ENCODE measurements at regions of chr10 and their contacts with region 1.

Region 1: DNA sequence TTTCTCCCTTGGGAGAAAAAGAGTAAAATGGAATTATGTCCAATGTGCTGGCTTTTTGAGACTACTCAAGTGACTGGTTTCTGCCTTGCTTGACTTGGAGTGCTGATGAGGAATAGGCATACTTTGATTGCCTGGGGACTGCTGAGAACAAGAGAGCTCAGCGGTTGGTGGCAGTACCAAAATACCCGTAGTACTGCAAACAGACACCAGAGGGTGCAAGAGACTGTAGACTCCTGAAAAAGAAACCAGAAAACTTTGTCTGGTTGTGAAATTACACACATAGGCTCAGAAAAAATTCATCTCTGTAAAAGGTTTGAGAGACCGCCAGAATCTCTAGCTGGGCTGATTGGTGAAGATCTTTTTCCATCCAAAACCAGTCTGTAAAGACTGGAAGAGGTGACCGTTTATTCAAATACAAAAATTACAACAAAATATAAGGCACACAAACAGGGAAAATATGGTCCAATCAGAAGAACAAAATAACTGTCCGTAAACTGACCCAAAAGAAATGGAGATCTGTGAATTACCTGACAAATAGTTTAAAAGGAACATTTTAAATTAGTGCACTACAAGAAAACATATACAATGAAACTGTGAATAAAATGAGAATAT is 18.5 kb downstream of the BICC1 start:
- DNase-seq: peak; percentile 65
- ATAC-seq: peak; percentile 89
- H3K4me3 ChIP-seq: no peak overlapping the region
- H3K27ac ChIP-seq: no peak overlapping the region
- H3K4me1 ChIP-seq: no peaks in the 10 kb centered on the region
- H3K27me3 ChIP-seq: no peaks in the 10 kb centered on the region
- CTCF ChIP-seq: peak; percentile 77
- EP300 ChIP-seq: no peak
- POLR2A ChIP-seq: no peak
- RAD21 ChIP-seq: peak; percentile 41

Region 2: GRCh38 chr10:58414270-58415041 is 116.7 kb before region 1 on chr10:
- CTCF ChIA-PET with region 1: interaction called, 13 read pairs
- POLR2A ChIA-PET with region 1: interaction called, 3 read pairs
- in situ Hi-C with region 1: no loop called
- intact Hi-C with region 1: loop called (anchors 1 kb)
- DNase-seq: peak; percentile 68
- ATAC-seq: peak; percentile 72
- H3K4me3 ChIP-seq: no peak overlapping the region
- H3K27ac ChIP-seq: no peak overlapping the region
- H3K4me1 ChIP-seq: peaks cover 9% of the 10 kb centered on the region
- H3K27me3 ChIP-seq: no peaks in the 10 kb centered on the region
- CTCF ChIP-seq: peak; percentile 65
- EP300 ChIP-seq: no peak
- POLR2A ChIP-seq: no peak
- RAD21 ChIP-seq: 0 out of 2 replicates have a peak, but pooled peaks have one; percentile 23

Region 3: GRCh38 chr10:58662314-58662713 is 131.1 kb after region 1 on chr10:
- CTCF ChIA-PET with region 1: no interaction called
- POLR2A ChIA-PET with region 1: no interaction called
- in situ Hi-C with region 1: no loop called
- intact Hi-C with region 1: loop called (anchors 5 kb)
- DNase-seq: peak; percentile 89
- ATAC-seq: peak; percentile 32; the same call in 1 of the 3 replicates
- H3K4me3 ChIP-seq: no peak overlapping the region
- H3K27ac ChIP-seq: no peak overlapping the region
- H3K4me1 ChIP-seq: peaks cover 27% of the 10 kb centered on the region
- H3K27me3 ChIP-seq: no peaks in the 10 kb centered on the region
- CTCF ChIP-seq: no peak
- EP300 ChIP-seq: peak in 1 of 2 experiments; percentile 57; a peak in 2 of 4 replicates
- POLR2A ChIP-seq: no peak
- RAD21 ChIP-seq: no peak

Region 4: DNA sequence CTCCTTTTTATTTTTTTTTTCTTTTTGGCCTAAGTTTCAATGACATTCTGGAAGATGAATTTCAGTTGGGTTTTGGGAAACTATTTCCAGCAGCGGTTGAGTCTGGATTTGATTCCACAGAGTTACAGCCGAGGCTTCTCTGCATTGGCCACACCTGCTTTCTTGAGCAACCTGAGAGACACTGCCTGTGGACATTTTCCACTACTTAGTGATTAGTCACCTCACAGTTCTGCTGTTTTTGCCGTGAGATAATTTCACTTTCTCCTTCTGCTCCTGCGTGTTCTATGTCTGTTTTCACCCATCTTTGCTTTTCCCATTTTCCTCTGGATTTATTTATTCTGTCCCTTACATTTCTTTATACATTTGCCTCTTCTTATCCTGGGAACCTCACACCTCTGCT is 224.5 kb after region 1 on chr10:
- CTCF ChIA-PET with region 1: no interaction called
- POLR2A ChIA-PET with region 1: no interaction called
- in situ Hi-C with region 1: no loop called
- intact Hi-C with region 1: loop called (anchors 10 kb)
- DNase-seq: no peak
- ATAC-seq: no peak
- H3K4me3 ChIP-seq: no peak overlapping the region
- H3K27ac ChIP-seq: no peak overlapping the region
- H3K4me1 ChIP-seq: peaks cover 30% of the 10 kb centered on the region
- H3K27me3 ChIP-seq: no peaks in the 10 kb centered on the region
- CTCF ChIP-seq: no peak
- EP300 ChIP-seq: no peak
- POLR2A ChIP-seq: no peak
- RAD21 ChIP-seq: no peak

Measured in HepG2 (cell line).